ENCODE measurements at regions of chr2 and their contacts with region 1.

Region 1: GRCh38 chr2:143205106-143205764 is 76.0 kb downstream of the ARHGAP15 start:
- DNase-seq: no peak
- CTCF ChIP-seq: no peak

Region 2: GRCh38 chr2:143068509-143068908 is 136.7 kb before region 1 on chr2:
- in situ Hi-C with region 1: no loop called
- DNase-seq: no peak
- CTCF ChIP-seq: no peak

Region 3: GRCh38 chr2:143110758-143111428 is 94.3 kb before region 1 on chr2:
- in situ Hi-C with region 1: loop called (anchors 10 kb)
- DNase-seq: no peak
- CTCF ChIP-seq: peak; percentile 77

Region 4: GRCh38 chr2:143171532-143172216 is 33.6 kb before region 1 on chr2:
- in situ Hi-C with region 1: no loop called
- DNase-seq: no peak
- CTCF ChIP-seq: no peak

Measured in GM13976 (cell line).